ENCODE measurements at regions of chr6 and their contacts with region 1.

Region 1: DNA sequence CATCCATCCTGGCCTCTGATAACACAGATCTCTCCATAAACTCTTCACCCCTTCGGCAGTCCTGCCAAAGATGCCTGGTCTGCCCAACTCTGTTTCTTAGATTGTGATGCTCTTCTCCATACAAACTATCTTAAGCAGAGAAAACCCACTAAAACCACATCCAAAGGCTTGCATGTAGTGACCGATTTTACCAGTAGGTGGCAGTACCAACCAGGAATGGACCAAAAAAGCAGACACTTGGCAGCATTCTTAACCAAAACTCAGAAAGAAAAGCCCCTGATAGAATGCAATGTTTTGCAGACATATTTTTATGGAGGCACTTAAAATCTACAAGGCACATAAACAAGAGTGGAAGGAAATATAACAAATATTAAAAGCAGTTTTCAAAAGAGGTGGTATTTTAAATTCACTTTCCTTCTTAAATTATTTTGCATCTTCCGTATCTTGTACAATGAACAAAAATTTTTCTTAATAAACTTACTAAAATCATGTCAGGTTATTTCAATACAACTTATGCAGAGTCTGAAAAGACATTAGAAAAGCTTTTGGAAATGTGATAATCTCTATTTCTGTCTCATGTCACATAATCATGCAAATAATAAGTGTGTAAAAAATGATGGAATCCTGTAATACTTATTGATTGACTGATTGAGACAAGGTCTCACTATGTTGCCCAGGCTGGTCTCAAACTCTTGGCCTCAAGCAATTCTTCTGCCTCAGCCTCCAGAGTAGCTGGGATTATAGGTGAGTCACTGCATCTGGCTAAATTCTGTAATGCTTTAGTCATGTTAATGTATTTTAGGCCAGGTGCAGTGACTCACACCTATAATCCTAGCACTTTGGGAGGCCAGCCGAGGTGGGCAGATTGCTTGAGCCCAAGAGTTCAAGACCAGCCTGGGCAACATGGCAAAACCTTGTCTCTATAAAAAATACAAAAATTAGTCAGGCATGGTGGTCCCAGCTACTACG is 29.4 kb downstream of the LRP11 start:
- DNase-seq: peak; percentile 53 to 74
- H3K4me3 ChIP-seq: no peak overlapping the region
- H3K4me3 Mint-ChIP-seq: no peak overlapping the region
- H3K27ac Mint-ChIP-seq: no peak overlapping the region
- H3K4me1 ChIP-seq: no peaks in the 10 kb centered on the region
- H3K4me1 Mint-ChIP-seq: no peaks in the 10 kb centered on the region
- H3K27me3 ChIP-seq: no peaks in the 10 kb centered on the region
- H3K27me3 Mint-ChIP-seq: no peaks in the 10 kb centered on the region
- CTCF ChIP-seq: peak; percentile 76 to 86

Region 2: DNA sequence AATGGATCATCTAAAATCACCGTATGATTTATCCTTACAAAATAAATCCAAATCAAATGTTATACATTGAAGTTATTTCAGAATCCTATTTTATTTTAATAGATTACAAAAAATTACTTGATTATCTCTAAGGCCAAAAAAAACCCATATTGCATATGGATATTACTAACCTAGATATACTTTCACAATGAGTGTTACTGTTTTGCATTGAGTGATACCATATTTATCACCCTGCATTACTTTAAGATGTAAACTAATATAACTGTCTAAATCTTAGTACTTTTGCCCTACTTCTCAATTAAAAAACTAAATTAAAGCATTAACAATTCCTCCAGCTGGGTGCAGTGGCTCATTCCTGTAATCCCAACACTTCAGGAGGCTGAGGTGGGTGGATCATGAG is 300.1 kb before region 1 on chr6:
- CTCF ChIA-PET with region 1: no interaction called
- POLR2A ChIA-PET with region 1: no interaction called
- intact Hi-C with region 1: no loop called
- DNase-seq: no peak
- H3K4me3 ChIP-seq: no peak overlapping the region
- H3K4me3 Mint-ChIP-seq: no peak overlapping the region
- H3K27ac Mint-ChIP-seq: no peak overlapping the region
- H3K4me1 ChIP-seq: no peaks in the 10 kb centered on the region
- H3K4me1 Mint-ChIP-seq: no peaks in the 10 kb centered on the region
- H3K27me3 ChIP-seq: no peaks in the 10 kb centered on the region
- H3K27me3 Mint-ChIP-seq: no peaks in the 10 kb centered on the region
- CTCF ChIP-seq: no peak

Region 3: DNA sequence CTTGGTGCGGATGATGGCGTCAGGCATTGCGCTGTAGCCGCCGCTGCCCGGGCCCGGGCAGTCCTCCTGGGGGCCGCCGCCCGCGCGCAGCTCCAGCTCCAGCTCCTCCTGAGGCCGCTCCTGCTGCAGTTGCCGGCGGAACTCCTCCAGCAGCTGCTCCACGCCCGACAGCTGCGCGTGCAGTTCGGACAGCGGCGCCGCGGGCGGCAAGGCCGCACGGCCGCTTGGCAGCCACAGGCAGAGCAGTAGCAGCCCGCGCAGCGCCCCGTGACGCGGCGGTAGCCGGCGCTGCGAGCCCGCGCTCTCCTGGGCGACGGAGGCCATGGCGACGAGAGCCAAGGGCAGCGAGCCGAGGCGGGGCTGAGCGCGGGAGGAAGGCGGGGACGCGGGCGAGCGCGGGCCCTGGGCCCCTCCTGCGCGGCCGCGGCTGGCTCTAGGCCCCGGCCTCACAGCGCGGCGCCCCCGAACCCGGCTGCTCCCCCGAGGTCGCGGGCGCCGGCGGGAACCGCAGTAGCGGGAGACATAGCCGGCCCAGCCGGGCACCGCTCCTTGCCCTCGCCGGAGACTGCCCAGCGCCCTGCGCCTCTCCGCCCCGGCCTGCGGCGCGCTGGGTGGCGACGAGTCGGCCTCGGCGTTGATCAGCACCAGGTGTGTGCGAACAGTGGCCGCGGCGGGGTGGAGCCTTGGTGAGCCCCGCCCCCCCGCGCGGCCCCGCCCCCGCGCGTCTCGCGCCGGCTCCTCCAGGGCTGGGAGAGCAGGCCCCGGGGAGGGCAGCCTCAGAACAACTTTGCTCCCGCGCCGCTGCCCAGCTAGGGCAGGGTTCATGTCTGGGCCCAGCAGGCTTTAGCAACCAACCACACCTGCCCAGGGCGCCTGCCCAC is 29.1 kb after region 1 on chr6 and contains the start of gene LRP11:
- CTCF ChIA-PET with region 1: interaction called, 3 read pairs
- POLR2A ChIA-PET with region 1: interaction called, 5 read pairs
- intact Hi-C with region 1: loop called (anchors 1 kb)
- DNase-seq: peak; percentile 83 to 92
- H3K4me3 ChIP-seq: peak within 1 kb of the TSS; percentile 75
- H3K4me3 Mint-ChIP-seq: peak within 1 kb of the TSS; percentile 86
- H3K27ac Mint-ChIP-seq: peak within 1 kb of the TSS; percentile 71
- H3K4me1 ChIP-seq: peaks cover 8% of the 10 kb centered on the region
- H3K4me1 Mint-ChIP-seq: peaks cover 28% of the 10 kb centered on the region
- H3K27me3 ChIP-seq: no peaks in the 10 kb centered on the region
- H3K27me3 Mint-ChIP-seq: no peaks in the 10 kb centered on the region
- CTCF ChIP-seq: no peak
- total RNA-seq, gene LRP11: 17.7 and 18.4 TPM in 2 replicates

Region 4: DNA sequence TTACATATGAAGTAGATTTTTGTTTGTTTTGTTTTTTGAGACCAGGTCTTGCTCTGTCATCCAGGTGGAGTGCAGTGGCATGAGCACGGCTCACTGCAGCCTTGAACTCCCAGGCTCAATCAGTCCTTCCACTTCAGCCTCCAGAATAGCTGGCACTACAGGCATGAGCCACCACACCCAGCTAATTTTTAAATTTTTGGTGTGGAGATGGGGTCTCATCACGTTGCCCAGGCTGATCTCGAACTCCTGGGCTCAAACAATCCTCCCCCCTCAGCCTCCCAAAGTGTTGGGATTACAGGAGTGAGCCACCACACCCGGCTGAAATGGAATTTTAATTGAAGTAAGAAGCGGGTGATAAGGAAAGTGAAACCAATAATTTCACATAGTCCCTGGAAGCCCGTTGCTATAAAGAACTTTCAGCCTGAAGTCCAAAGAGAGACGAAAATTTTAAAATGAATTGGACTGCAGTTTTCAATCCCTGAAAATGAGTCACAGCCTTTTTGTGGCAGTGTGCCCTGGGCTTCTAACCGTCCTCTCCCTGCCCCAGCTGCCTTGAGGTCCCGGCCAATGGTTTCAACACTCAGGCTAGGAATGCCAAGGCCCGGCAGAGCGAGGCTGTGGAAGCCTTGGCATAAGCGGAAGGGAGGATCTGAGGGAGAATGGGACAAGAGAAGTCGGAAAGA is 62.4 kb after region 1 on chr6:
- CTCF ChIA-PET with region 1: interaction called, 3 read pairs
- POLR2A ChIA-PET with region 1: no interaction called
- intact Hi-C with region 1: loop called (anchors 1 kb)
- DNase-seq: no peak
- H3K4me3 ChIP-seq: no peak overlapping the region
- H3K4me3 Mint-ChIP-seq: no peak overlapping the region
- H3K27ac Mint-ChIP-seq: no peak overlapping the region
- H3K4me1 ChIP-seq: no peaks in the 10 kb centered on the region
- H3K4me1 Mint-ChIP-seq: no peaks in the 10 kb centered on the region
- H3K27me3 ChIP-seq: no peaks in the 10 kb centered on the region
- H3K27me3 Mint-ChIP-seq: peaks cover 11% of the 10 kb centered on the region
- CTCF ChIP-seq: no peak

Measured in Caco-2 (cell line).